Breast epithelium (tissue), 4 donors: ENCODE measurements at regions of chr4 and their contacts with region 1.

Region 1: GRCh38 chr4:171794528-171794927 is 18.7 kb upstream of the GALNTL6 start:
- DNase-seq: no peak
- H3K4me3 ChIP-seq: no peak overlapping the region
- H3K27ac ChIP-seq: no peak overlapping the region
- H3K4me1 ChIP-seq: no peaks in the 10 kb centered on the region
- H3K27me3 ChIP-seq: no peaks in the 10 kb centered on the region
- CTCF ChIP-seq: no peak
- POLR2A ChIP-seq: no peak

Region 2: DNA sequence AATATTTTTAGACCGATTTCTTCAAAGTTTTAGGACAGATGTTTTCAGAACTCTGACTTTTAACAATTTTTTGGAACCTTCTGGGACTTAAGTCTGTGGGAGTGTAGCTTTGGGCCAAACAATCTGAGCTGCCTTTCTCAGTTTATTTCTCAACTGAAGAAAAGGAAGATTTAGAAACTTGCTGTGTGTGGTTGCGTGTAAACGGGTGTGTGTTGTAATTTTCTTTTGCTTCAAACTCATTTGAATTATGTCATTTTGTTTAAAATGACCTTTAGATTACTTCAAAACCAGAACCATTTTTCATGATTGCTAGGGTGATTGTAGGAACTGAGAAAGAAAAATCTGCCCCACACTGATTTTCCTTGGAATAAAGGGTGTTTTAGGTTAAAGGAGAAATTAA is 559.0 kb before region 1 on chr4:
- intact Hi-C with region 1: no loop called
- DNase-seq: no peak
- H3K4me3 ChIP-seq: no peak overlapping the region
- H3K27ac ChIP-seq: no peak overlapping the region
- H3K4me1 ChIP-seq: no peaks in the 10 kb centered on the region
- H3K27me3 ChIP-seq: no peaks in the 10 kb centered on the region
- CTCF ChIP-seq: no peak
- POLR2A ChIP-seq: no peak

Region 3: GRCh38 chr4:171727185-171727584 is 67.3 kb before region 1 on chr4:
- intact Hi-C with region 1: no loop called
- DNase-seq: no peak
- H3K4me3 ChIP-seq: no peak overlapping the region
- H3K27ac ChIP-seq: no peak overlapping the region
- H3K4me1 ChIP-seq: no peaks in the 10 kb centered on the region
- H3K27me3 ChIP-seq: no peaks in the 10 kb centered on the region
- CTCF ChIP-seq: no peak
- POLR2A ChIP-seq: no peak

Region 4: GRCh38 chr4:171746418-171746817 is 48.1 kb before region 1 on chr4:
- intact Hi-C with region 1: loop called (anchors 2 kb)
- DNase-seq: no peak
- H3K4me3 ChIP-seq: no peak overlapping the region
- H3K27ac ChIP-seq: no peak overlapping the region
- H3K4me1 ChIP-seq: no peaks in the 10 kb centered on the region
- H3K27me3 ChIP-seq: no peaks in the 10 kb centered on the region
- CTCF ChIP-seq: no peak
- POLR2A ChIP-seq: no peak